Mammary epithelial cell (primary cell): ENCODE measurements at regions of chr6 and their contacts with region 1.

Region 1: GRCh38 chr6:157830354-157831017 is 7.4 kb downstream of the SNX9 start:
- DNase-seq: peak; percentile 16
- H3K4me3 ChIP-seq: no peak overlapping the region
- H3K27ac ChIP-seq: no peak overlapping the region
- H3K4me1 ChIP-seq: peaks cover 45% of the 10 kb centered on the region
- H3K27me3 ChIP-seq: no peaks in the 10 kb centered on the region
- CTCF ChIP-seq: no peak

Region 2: DNA sequence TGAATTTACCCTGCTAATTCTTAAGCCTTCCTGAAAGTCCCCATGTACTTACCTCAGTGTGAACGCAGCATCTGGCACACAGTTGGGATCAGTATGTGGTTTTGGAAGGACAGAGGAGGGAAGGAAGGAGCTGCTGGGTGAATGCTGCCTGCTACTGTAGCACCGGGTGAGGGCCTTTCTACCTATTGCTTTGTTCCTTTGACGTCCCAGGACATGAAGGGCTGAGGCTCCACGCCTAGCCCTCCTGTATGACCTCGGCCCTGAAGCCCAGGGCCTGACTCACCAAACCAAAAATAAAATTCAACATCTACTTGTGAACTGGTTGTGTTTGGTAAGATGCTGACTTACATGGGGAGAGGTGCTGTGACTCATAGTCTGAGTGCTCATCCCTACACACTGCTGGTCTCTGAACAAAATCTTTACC is 1002.2 kb before region 1 on chr6:
- CTCF ChIA-PET with region 1: no interaction called
- dilution Hi-C with region 1: no loop called
- in situ Hi-C with region 1: no loop called
- intact Hi-C with region 1: no loop called
- DNase-seq: peak; percentile 93
- H3K4me3 ChIP-seq: no peak overlapping the region
- H3K27ac ChIP-seq: peak overlapping the region; percentile 62
- H3K4me1 ChIP-seq: peaks cover 26% of the 10 kb centered on the region
- H3K27me3 ChIP-seq: no peaks in the 10 kb centered on the region
- CTCF ChIP-seq: no peak

Region 3: DNA sequence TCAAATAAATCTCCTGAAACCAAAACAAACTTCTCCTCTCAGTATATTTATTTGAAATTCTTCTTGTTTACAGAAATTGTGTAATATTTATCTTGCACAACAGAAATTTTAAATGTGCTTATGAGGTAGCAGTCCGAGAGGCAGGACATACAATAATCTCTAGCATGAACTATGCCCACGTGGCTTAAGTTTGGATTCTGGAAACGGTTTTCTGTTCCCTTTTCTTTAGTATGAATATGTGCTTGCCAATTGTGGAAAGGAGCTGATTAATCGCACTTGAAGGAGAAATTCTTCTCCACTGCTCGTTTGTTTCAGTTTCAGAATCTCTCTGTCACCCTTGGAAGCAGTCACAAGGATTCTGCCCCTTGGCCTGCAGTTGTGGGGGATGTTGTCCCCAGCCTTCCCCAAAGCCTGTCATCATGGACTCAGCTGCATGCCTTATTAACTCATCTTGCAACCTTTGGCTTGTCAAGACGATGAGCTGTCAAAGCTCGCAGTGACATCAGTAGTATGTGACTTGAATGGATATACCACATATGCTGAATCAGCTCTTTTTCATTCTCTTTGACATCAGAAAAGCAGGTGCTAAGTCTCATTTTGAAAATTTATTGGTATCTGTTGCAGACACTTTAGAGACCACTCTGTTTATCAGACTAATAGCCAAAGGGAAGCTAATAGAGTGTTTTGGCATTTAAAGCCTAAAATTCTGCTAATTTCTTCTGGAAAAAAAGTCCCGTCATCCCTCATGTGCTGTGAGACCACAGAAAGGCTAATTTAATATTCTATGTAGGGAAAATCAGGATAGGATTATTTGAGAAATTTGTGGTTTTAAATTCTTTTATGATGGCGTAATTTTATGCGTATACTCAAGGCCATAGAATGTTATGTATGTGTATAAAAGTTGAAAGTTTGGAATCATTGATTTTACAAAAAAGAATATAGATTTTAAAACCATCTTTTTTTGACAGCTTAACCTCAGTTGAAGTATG is 866.5 kb before region 1 on chr6:
- CTCF ChIA-PET with region 1: no interaction called
- dilution Hi-C with region 1: no loop called
- in situ Hi-C with region 1: no loop called
- intact Hi-C with region 1: no loop called
- DNase-seq: peak; percentile 6
- H3K4me3 ChIP-seq: no peak overlapping the region
- H3K27ac ChIP-seq: no peak overlapping the region
- H3K4me1 ChIP-seq: peaks cover 6% of the 10 kb centered on the region
- H3K27me3 ChIP-seq: no peaks in the 10 kb centered on the region
- CTCF ChIP-seq: no peak

Region 4: GRCh38 chr6:157867155-157867559 is 36.7 kb after region 1 on chr6:
- CTCF ChIA-PET with region 1: no interaction called
- dilution Hi-C with region 1: loop called (anchors 5 kb)
- in situ Hi-C with region 1: no loop called
- intact Hi-C with region 1: no loop called
- DNase-seq: peak; percentile 66
- H3K4me3 ChIP-seq: no peak overlapping the region
- H3K27ac ChIP-seq: no peak overlapping the region
- H3K4me1 ChIP-seq: peaks cover 12% of the 10 kb centered on the region
- H3K27me3 ChIP-seq: no peaks in the 10 kb centered on the region
- CTCF ChIP-seq: no peak

Region 5: GRCh38 chr6:157921685-157922367 is 91.3 kb after region 1 on chr6:
- CTCF ChIA-PET with region 1: no interaction called
- dilution Hi-C with region 1: no loop called
- in situ Hi-C with region 1: no loop called
- intact Hi-C with region 1: no loop called
- DNase-seq: no peak
- H3K4me3 ChIP-seq: no peak overlapping the region
- H3K27ac ChIP-seq: no peak overlapping the region
- H3K4me1 ChIP-seq: no peaks in the 10 kb centered on the region
- H3K27me3 ChIP-seq: no peaks in the 10 kb centered on the region
- CTCF ChIP-seq: no peak